Dorsolateral prefrontal cortex (tissue), 120 donors: ENCODE measurements at regions of chr19 and their contacts with region 1.

Region 1: DNA sequence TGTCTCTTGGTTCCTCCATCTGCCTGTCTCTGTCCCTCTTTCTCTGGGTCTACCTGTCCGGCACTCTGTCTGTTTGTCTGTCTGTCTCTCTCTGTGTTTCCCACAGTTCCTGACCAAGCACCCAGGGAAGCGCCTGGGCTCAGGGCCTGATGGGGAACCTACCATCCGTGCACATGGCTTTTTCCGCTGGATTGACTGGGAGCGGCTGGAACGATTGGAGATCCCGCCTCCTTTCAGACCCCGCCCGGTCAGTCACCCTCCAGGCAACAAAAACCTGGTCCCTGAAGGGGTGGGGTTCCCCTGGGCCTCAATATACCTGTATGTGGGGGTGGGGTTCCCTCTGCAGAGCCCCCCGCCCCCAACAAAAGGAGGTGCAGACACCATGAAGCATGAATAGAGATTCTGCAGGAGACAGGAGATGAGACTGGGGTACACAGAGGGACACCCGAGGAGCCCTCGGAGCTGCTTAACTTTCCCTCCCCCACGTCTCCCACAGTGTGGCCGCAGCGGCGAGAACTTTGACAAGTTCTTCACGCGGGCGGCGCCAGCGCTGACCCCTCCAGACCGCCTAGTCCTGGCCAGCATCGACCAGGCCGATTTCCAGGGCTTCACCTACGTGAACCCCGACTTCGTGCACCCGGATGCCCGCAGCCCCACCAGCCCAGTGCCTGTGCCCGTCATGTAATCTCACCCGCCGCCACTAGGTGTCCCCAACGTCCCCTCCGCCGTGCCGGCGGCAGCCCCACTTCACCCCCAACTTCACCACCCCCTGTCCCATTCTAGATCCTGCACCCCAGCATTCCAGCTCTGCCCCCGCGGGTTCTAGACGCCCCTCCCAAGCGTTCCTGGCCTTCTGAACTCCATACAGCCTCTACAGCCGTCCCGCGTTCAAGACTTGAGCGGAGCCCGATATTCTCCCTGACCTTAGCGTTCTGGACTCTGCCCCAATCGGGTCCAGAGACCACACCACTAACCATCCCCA is 2.6 kb upstream of the CACNG7 start:
- DNase-seq: peak; percentile 53 to 83 (median 70)
- H3K4me3 ChIP-seq: peak overlapping the region in 52 of 59 donors; percentile 1 to 94 (median 78)
- H3K27ac ChIP-seq: peak overlapping the region in 6 of 59 donors; percentile 70 to 89 (median 77)
- H3K27me3 ChIP-seq: peaks cover 0 to 27% (median 0%) of the 10 kb centered on the region in 45 donors
- CTCF ChIP-seq: peak; percentile 42 to 93 (median 84)

Region 2: GRCh38 chr19:53977429-53977990 is 71.0 kb after region 1 on chr19:
- intact Hi-C with region 1: loop called (anchors 1 to 5 kb)
- DNase-seq: peak; percentile 56 to 93 (median 82)
- H3K4me3 ChIP-seq: peak overlapping the region; percentile 22 to 68 (median 53)
- H3K27ac ChIP-seq: peak overlapping the region in 36 of 59 donors; percentile 1 to 80 (median 54)
- H3K27me3 ChIP-seq: peaks cover 0 to 43% (median 6%) of the 10 kb centered on the region in 45 donors
- CTCF ChIP-seq: peak in 9 of 56 donors; percentile 9 to 35 (median 15)